A549 (cell line): ENCODE measurements at regions of chr1 and their contacts with region 1.

Region 1: GRCh38 chr1:39538588-39539465 is 37.8 kb downstream of the PABPC4 start:
- DNase-seq: peak; percentile 63 to 70
- ATAC-seq: peak; percentile 98 to 99
- H3K4me3 ChIP-seq: no peak overlapping the region
- H3K27ac ChIP-seq: peak overlapping the region in 1 of 2 experiments; percentile 59; a peak in 1 of 6 replicates
- H3K4me1 ChIP-seq: no peaks in the 10 kb centered on the region
- CTCF ChIP-seq: peak; percentile 81
- EP300 ChIP-seq: no peak
- POLR2A ChIP-seq: no peak
- RAD21 ChIP-seq: peak; percentile 72 to 81

Region 2: DNA sequence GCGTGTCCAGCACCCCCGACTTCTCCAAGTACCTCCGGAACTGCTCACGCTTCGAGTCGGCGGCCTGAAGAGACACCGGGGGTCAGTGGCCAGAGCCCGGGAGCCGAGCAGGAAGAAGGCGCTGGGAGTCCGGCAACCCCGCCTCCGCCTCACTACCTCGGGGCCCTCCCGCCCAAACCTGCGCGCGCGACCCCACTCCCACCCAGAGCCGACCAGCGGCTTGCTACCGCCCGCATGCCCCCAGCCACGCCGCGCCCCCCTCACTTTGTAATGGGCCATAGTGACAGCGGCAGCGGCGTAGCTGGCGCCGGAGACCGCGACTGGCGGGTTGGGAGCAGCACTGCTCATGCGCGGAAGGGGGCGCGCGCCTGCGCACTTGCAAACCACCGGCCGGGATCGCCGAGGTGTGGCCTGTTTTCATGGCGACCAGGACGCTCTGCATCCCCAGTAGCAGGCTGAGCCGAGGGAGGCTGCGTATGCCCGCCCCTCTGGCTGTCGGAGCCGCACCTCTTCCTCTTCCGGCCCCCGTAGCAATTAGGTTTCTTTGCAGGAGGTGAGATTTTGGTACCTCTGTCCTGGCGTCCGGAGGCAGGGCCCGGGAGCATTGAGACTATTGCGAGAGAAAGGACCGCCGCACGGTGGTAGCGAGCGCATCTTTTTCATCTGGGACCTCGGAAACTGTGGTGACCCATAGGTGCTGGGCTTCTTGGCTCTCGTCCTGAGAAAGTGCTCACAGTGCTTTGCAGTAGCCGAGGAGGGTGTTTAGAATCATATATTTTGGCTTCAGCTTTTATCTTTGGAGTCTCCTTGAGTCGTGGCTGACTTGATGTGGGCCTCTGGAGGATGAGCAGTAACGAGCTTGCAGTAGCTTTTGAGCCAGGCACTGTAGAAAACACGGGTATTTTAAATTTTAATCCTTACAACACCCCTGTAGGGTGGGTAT is 665.5 kb before region 1 on chr1 and contains the start of gene MYCBP:
- CTCF ChIA-PET with region 1: no interaction called
- POLR2A ChIA-PET with region 1: interaction called, 10 read pairs
- DNase-seq: peak; percentile 93 to 94
- ATAC-seq: peak; percentile 99 to 100
- H3K4me3 ChIP-seq: peak within 1 kb of the TSS; percentile 63
- H3K27ac ChIP-seq: peak within 1 kb of the TSS; percentile 78 to 88
- H3K4me1 ChIP-seq: peaks cover 10% of the 10 kb centered on the region; the same call in 2 of the 3 replicates
- CTCF ChIP-seq: no peak
- EP300 ChIP-seq: no peak
- POLR2A ChIP-seq: peak; percentile 42
- RAD21 ChIP-seq: no peak
- polyA plus RNA-seq, gene MYCBP: 20.8 and 25.5 TPM in 2 replicates

Region 3: GRCh38 chr1:39525366-39526165 is 13.3 kb before region 1 on chr1:
- CTCF ChIA-PET with region 1: interaction called, 51 read pairs
- POLR2A ChIA-PET with region 1: no interaction called
- DNase-seq: no peak
- ATAC-seq: no peak
- H3K4me3 ChIP-seq: no peak overlapping the region
- H3K27ac ChIP-seq: no peak overlapping the region
- H3K4me1 ChIP-seq: no peaks in the 10 kb centered on the region
- CTCF ChIP-seq: no peak
- EP300 ChIP-seq: no peak
- POLR2A ChIP-seq: no peak
- RAD21 ChIP-seq: no peak

Region 4: DNA sequence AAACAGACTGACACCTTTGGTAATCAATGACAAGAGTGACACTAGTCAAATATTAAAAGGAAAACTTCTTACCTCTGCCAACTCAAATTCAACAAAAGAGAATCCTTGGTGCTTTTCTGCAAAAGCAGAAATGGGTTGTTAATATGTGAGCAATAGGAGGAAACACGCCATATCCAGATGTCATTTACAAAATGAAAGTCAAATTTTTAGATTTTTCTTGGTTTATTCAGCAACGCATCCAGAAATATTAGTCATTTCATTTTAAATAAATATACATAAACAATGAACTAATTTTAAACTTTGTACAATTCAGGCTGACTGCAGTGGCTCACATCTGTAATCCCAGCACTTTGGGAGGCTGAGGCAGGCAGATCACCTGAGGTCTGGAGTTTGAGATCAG is 15.4 kb after region 1 on chr1:
- CTCF ChIA-PET with region 1: interaction called, 14 read pairs
- POLR2A ChIA-PET with region 1: no interaction called
- DNase-seq: no peak
- ATAC-seq: no peak
- H3K4me3 ChIP-seq: no peak overlapping the region
- H3K27ac ChIP-seq: no peak overlapping the region
- H3K4me1 ChIP-seq: peaks cover 5% of the 10 kb centered on the region; the same call in 2 of the 3 replicates
- CTCF ChIP-seq: no peak
- EP300 ChIP-seq: no peak
- POLR2A ChIP-seq: no peak
- RAD21 ChIP-seq: no peak

Region 5: DNA sequence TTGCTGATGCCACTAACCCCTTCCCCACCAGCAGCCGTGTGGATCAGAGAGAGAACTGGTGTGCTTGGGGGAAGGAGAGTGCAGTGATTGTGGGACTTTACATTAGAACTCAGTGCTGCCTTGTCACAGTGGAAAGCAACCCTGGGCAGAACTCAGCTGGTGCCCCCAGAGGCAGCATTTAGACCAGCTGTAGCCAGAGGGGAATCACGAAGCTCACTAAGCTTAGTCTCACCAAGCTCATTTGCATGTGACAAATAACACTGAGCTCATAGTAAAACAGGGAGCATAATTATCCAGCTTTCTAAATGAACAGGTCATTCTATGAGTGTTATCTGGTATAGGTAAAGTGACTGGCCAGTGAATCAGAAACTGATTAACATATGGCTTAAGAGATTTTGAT is 824.9 kb after region 1 on chr1:
- CTCF ChIA-PET with region 1: no interaction called
- POLR2A ChIA-PET with region 1: no interaction called
- DNase-seq: no peak
- ATAC-seq: no peak
- H3K4me3 ChIP-seq: no peak overlapping the region
- H3K27ac ChIP-seq: no peak overlapping the region
- H3K4me1 ChIP-seq: no peaks in the 10 kb centered on the region
- CTCF ChIP-seq: no peak
- EP300 ChIP-seq: no peak
- POLR2A ChIP-seq: no peak
- RAD21 ChIP-seq: no peak

Region 6: GRCh38 chr1:40546957-40547356 is 1008.1 kb after region 1 on chr1:
- CTCF ChIA-PET with region 1: no interaction called
- POLR2A ChIA-PET with region 1: no interaction called
- DNase-seq: peak in 1 of 2 experiments; percentile 4
- ATAC-seq: no peak
- H3K4me3 ChIP-seq: no peak overlapping the region
- H3K27ac ChIP-seq: no peak overlapping the region
- H3K4me1 ChIP-seq: no peaks in the 10 kb centered on the region
- CTCF ChIP-seq: no peak
- EP300 ChIP-seq: no peak
- POLR2A ChIP-seq: no peak
- RAD21 ChIP-seq: no peak